ENCODE measurements at regions of chr1 and their contacts with region 1.

Region 1: DNA sequence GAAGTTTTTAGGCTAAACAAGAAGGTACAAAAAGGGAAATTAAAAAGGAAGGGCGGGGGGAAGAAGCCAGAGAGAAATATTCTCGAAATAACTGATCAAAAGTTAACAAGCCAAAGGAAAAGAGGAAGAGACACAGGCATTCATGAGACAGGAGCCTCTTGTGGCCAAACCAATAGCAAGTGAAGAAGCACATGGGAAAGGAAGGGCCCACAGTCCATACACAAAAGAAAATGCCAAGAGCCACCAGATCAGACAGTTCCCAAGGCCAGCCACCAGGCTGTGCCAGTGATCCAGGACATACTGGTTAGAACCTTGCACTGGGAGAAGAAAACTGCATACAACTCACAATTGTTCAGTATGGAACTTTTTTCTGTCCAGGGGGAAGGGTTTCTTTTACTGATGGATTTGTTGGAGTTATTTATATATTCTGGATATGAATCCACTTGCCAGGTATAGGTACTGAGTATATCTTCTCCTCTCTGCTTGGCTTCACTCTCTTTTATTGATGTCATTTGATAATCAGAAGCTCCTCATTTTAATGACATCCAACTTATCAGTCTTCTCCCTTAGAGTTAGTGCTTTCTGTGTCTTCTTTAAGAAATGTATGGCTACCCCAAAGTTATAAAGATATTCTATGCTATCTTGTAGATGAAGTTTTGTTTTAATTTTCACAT is 76.8 kb downstream of the CD46 start:
- DNase-seq: peak; percentile 87
- H3K4me3 ChIP-seq: no peak overlapping the region
- H3K27ac ChIP-seq: peak overlapping the region; percentile 93
- H3K4me1 ChIP-seq: peaks cover 31% of the 10 kb centered on the region
- H3K27me3 ChIP-seq: no peaks in the 10 kb centered on the region
- CTCF ChIP-seq: peak; percentile 77

Region 2: GRCh38 chr1:207866471-207867135 is 38.0 kb after region 1 on chr1:
- intact Hi-C with region 1: loop called (anchors 2 kb)
- DNase-seq: peak; percentile 63
- H3K4me3 ChIP-seq: no peak overlapping the region
- H3K27ac ChIP-seq: peak overlapping the region; percentile 89
- H3K4me1 ChIP-seq: peaks cover 16% of the 10 kb centered on the region
- H3K27me3 ChIP-seq: no peaks in the 10 kb centered on the region
- CTCF ChIP-seq: no peak

Region 3: DNA sequence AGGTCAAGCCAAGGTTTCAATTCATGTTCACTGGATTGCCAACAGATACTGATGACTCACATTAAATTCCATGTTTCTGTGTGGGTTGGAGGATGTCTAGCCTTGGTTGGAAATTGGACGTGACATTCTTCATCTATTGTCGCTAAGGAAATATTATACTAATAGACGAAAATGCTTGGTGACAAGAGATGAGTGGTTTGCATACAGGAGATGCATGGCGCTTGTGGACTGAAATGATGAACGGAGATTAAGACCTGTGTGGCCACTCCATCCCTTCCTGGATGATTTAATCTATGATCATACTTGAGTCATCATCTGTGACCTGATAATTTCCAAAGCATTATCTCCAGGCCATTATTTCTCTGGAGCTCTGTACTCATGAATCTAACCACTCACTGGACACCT is 179.3 kb after region 1 on chr1:
- intact Hi-C with region 1: no loop called
- DNase-seq: no peak
- H3K4me3 ChIP-seq: no peak overlapping the region
- H3K27ac ChIP-seq: no peak overlapping the region
- H3K4me1 ChIP-seq: no peaks in the 10 kb centered on the region
- H3K27me3 ChIP-seq: no peaks in the 10 kb centered on the region
- CTCF ChIP-seq: no peak